GM12878 (cell line): ENCODE measurements at regions of chr7 and their contacts with region 1.

Region 1: DNA sequence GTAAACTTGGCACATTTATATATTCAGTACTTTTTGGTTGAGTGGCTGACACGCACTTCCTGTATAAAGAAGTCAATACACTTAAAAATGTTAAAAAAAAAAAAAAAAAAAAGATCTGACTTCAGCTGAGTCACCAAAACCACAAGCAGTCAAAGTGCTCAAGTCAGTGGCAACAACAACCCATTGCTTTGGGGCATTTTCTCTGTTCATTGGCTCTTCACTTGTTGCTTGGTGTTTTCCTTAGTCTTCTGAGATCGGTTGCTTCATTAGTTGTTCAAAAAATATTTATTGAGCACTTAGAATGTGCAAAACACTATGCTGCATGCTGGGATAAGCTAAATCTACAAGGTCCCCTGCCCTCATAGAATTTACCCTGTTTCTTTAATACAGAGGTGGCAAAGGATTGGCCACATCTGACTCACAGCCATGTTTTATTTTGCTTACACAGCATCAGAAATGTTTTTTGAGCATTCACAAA is 63.7 kb downstream of the ZNRF2 start:
- DNase-seq: peak; percentile 85
- ATAC-seq: peak; percentile 92
- H3K4me3 ChIP-seq: peak overlapping the region; percentile 4; the same call in 1 of the 2 replicates
- H3K27ac ChIP-seq: peak overlapping the region; percentile 83
- H3K4me1 ChIP-seq: peaks cover 23% of the 10 kb centered on the region; the same call in 1 of the 2 replicates
- H3K27me3 ChIP-seq: no peaks in the 10 kb centered on the region
- CTCF ChIP-seq: no peak
- EP300 ChIP-seq: peak; percentile 56 to 72; a peak in 2 of 4 replicates
- POLR2A ChIP-seq: no peak
- RAD21 ChIP-seq: no peak

Region 2: DNA sequence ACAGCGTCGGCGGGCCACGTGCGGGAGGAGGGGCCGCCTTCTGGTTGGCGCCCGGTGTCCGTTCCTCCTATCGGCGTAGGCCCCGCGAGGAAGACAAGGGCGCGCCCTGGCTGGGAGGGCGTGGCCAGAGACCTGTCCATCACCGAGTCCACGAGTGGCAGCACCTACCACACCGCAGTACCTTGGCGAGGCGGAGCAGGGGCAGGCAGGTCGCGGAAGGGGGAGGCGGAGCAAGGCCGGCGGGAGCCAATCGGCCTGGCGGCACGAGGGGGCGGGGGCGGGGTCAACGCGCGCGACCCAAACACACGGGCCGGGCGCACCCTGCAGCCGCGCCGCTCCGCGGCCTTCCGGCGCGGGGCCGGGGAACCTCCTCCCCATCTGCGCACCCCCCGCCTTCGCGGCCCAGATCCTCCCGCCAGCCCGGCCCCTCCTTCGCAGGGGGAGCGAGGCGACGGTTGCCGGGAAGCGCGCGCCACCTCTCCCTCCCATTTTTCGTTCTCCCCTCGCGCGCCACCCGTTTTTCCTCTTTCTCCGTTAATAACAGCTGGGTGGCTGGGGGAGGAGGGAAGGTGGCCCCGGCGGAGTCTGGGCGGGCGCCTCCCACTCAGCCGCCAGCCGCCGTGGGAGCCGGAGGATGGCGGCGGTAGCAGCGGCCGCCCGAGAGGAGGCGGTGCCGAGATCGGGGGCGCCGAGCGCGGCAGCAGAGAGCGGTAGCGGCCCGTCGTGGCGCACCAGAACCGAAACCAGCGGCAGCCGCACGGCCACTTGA is 63.6 kb before region 1 on chr7 and contains the start of gene ZNRF2:
- CTCF ChIA-PET with region 1: interaction called, 138 read pairs
- POLR2A ChIA-PET with region 1: interaction called, 23 read pairs
- RAD21 ChIA-PET with region 1: interaction called, 108 read pairs
- SMC1A ChIA-PET with region 1: interaction called, 202 read pairs
- in situ Hi-C with region 1: no loop called
- intact Hi-C with region 1: loop called (anchors 2 kb)
- DNase-seq: peak; percentile 97
- ATAC-seq: peak; percentile 91
- H3K4me3 ChIP-seq: peak within 1 kb of the TSS; percentile 61; the same call in 1 of the 2 replicates
- H3K27ac ChIP-seq: peak within 1 kb of the TSS; percentile 83
- H3K4me1 ChIP-seq: peaks cover 12% of the 10 kb centered on the region
- H3K27me3 ChIP-seq: no peaks in the 10 kb centered on the region
- CTCF ChIP-seq: peak; percentile 21 to 63 (median 39); a peak in 4 of 6 replicates
- EP300 ChIP-seq: no peak
- POLR2A ChIP-seq: peak; percentile 84
- RAD21 ChIP-seq: peak; percentile 33; the same call in 1 of the 2 replicates
- polyA plus RNA-seq, gene ZNRF2: 3.1 to 4.0 TPM

Region 3: GRCh38 chr7:30308389-30308788 is 39.7 kb before region 1 on chr7:
- CTCF ChIA-PET with region 1: interaction called, 8 read pairs
- POLR2A ChIA-PET with region 1: interaction called, 4 read pairs
- RAD21 ChIA-PET with region 1: interaction called, 5 read pairs
- SMC1A ChIA-PET with region 1: interaction called, 12 read pairs
- in situ Hi-C with region 1: no loop called
- intact Hi-C with region 1: no loop called
- DNase-seq: no peak
- ATAC-seq: peak; percentile 46
- H3K4me3 ChIP-seq: no peak overlapping the region
- H3K27ac ChIP-seq: peak overlapping the region; percentile 2; the same call in 1 of the 2 replicates
- H3K4me1 ChIP-seq: peaks cover 44% of the 10 kb centered on the region
- H3K27me3 ChIP-seq: no peaks in the 10 kb centered on the region
- CTCF ChIP-seq: no peak
- EP300 ChIP-seq: no peak
- POLR2A ChIP-seq: no peak
- RAD21 ChIP-seq: no peak

Region 4: DNA sequence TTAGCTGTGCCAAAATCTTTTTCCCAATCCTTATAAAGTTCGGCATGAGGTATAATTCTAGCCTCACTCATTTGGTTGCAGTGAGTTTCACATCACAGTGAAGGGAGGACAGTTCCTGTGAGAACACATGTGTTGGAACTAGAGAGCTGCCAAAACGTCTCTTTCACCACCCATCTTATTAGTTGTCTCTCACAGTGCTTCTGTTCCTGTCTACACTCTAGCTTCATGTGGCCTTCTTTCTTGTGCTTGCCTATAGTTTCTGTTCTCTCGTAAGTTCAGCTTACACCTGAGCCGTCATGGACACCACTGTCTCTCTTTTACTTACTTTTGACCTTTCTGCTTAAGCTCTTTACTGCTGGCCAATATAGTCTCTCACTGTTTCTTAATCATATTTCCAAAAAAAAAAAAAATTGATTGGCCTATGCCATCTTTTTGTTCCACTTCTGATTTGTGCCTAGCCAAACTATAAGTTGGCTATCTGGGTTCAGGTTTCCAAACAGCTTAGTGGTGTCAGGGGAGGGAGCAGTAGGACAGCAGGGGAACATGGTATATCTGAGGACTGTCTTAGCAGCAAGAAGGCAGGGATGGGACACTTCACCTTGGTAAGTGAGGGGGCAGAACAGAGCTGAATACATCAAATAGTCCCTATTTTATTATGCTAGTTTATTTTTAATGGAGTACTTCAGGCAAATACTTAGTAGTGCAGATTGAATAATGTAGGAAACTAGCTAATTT is 25.7 kb before region 1 on chr7:
- CTCF ChIA-PET with region 1: interaction called, 57 read pairs
- POLR2A ChIA-PET with region 1: interaction called, 17 read pairs
- RAD21 ChIA-PET with region 1: interaction called, 59 read pairs
- SMC1A ChIA-PET with region 1: interaction called, 181 read pairs
- in situ Hi-C with region 1: no loop called
- intact Hi-C with region 1: loop called (anchors 2 kb)
- DNase-seq: peak; percentile 74
- ATAC-seq: peak; percentile 90
- H3K4me3 ChIP-seq: peak overlapping the region; percentile 57
- H3K27ac ChIP-seq: peak overlapping the region; percentile 87
- H3K4me1 ChIP-seq: peaks cover 18% of the 10 kb centered on the region
- H3K27me3 ChIP-seq: no peaks in the 10 kb centered on the region
- CTCF ChIP-seq: no peak
- EP300 ChIP-seq: no peak
- POLR2A ChIP-seq: peak; percentile 26; the same call in 1 of the 2 replicates
- RAD21 ChIP-seq: no peak

Region 5: GRCh38 chr7:30330134-30331111 is 17.7 kb before region 1 on chr7:
- CTCF ChIA-PET with region 1: interaction called, 16 read pairs
- POLR2A ChIA-PET with region 1: interaction called, 18 read pairs
- RAD21 ChIA-PET with region 1: interaction called, 54 read pairs
- SMC1A ChIA-PET with region 1: interaction called, 181 read pairs
- in situ Hi-C with region 1: no loop called
- intact Hi-C with region 1: no loop called
- DNase-seq: peak; percentile 74
- ATAC-seq: peak; percentile 96
- H3K4me3 ChIP-seq: peak overlapping the region; percentile 4; the same call in 1 of the 2 replicates
- H3K27ac ChIP-seq: peak overlapping the region; percentile 60
- H3K4me1 ChIP-seq: peaks cover 20% of the 10 kb centered on the region
- H3K27me3 ChIP-seq: no peaks in the 10 kb centered on the region
- CTCF ChIP-seq: no peak
- EP300 ChIP-seq: peak; percentile 49 to 53; a peak in 1 of 4 replicates
- POLR2A ChIP-seq: no peak
- RAD21 ChIP-seq: no peak

Region 6: GRCh38 chr7:30335763-30336487 is 12.2 kb before region 1 on chr7:
- CTCF ChIA-PET with region 1: interaction called, 19 read pairs
- POLR2A ChIA-PET with region 1: interaction called, 18 read pairs
- RAD21 ChIA-PET with region 1: interaction called, 54 read pairs
- SMC1A ChIA-PET with region 1: interaction called, 181 read pairs
- in situ Hi-C with region 1: no loop called
- intact Hi-C with region 1: no loop called
- DNase-seq: no peak
- ATAC-seq: no peak
- H3K4me3 ChIP-seq: no peak overlapping the region
- H3K27ac ChIP-seq: no peak overlapping the region
- H3K4me1 ChIP-seq: peaks cover 8% of the 10 kb centered on the region; the same call in 1 of the 2 replicates
- H3K27me3 ChIP-seq: no peaks in the 10 kb centered on the region
- CTCF ChIP-seq: no peak
- EP300 ChIP-seq: no peak
- POLR2A ChIP-seq: no peak
- RAD21 ChIP-seq: no peak

Region 7: GRCh38 chr7:30366606-30367005 is 18.5 kb after region 1 on chr7:
- CTCF ChIA-PET with region 1: interaction called, 9 read pairs
- POLR2A ChIA-PET with region 1: interaction called, 4 read pairs
- RAD21 ChIA-PET with region 1: interaction called, 5 read pairs
- SMC1A ChIA-PET with region 1: interaction called, 23 read pairs
- in situ Hi-C with region 1: no loop called
- intact Hi-C with region 1: no loop called
- DNase-seq: no peak
- ATAC-seq: no peak
- H3K4me3 ChIP-seq: no peak overlapping the region
- H3K27ac ChIP-seq: no peak overlapping the region
- H3K4me1 ChIP-seq: no peaks in the 10 kb centered on the region
- H3K27me3 ChIP-seq: no peaks in the 10 kb centered on the region
- CTCF ChIP-seq: no peak
- EP300 ChIP-seq: no peak
- POLR2A ChIP-seq: no peak
- RAD21 ChIP-seq: no peak